A673 (cell line): ENCODE measurements at regions of chr10 and their contacts with region 1.

Region 1: GRCh38 chr10:19728376-19728775 is 87.9 kb upstream of the PLXDC2 start:
- DNase-seq: no peak
- H3K4me3 ChIP-seq: no peak overlapping the region
- H3K27ac ChIP-seq: no peak overlapping the region
- H3K4me1 ChIP-seq: peaks cover 4% of the 10 kb centered on the region
- H3K27me3 ChIP-seq: no peaks in the 10 kb centered on the region
- CTCF ChIP-seq: no peak

Region 2: DNA sequence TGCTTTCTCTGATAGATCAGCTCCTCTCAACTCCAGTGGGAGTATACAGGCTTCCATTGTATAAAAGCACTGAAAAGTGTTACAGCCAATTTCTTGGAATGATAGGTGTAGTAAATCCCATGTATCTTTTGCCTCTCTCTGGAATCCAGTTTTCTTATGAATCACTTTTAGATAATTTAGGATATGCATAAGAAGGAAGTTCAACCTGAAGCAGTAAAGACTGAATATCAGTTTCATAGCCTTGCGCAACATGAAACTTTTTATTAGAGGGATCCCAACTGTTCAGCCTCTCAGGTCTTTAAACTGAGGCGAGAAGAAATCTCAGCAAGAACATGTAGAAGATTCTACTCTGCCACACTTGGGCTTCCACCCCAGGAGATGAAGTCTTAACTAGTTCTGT is 399.8 kb before region 1 on chr10:
- CTCF ChIA-PET with region 1: no interaction called
- POLR2A ChIA-PET with region 1: interaction called, 17 read pairs
- intact Hi-C with region 1: no loop called
- DNase-seq: no peak
- H3K4me3 ChIP-seq: no peak overlapping the region
- H3K27ac ChIP-seq: no peak overlapping the region
- H3K4me1 ChIP-seq: no peaks in the 10 kb centered on the region
- H3K27me3 ChIP-seq: no peaks in the 10 kb centered on the region
- CTCF ChIP-seq: no peak

Region 3: DNA sequence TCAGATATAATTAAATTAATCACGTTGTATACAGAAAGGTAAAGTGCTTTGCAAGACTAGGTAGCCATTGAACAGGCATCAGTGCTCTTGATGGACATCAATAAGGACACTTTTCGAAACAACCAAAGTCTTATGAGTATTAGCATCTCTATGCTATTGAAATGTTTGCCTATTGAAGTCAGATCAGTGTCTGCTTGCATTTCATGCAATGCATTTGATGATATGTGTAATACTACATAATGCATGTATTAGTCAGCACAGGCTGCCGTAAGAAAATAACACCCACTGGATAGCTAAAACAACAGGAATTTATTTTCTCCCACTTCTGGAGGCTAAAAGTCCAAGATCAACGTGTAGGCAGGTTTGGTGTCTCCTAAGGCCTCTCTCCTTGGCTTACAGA is 121.4 kb before region 1 on chr10:
- CTCF ChIA-PET with region 1: no interaction called
- POLR2A ChIA-PET with region 1: no interaction called
- intact Hi-C with region 1: no loop called
- DNase-seq: no peak
- H3K4me3 ChIP-seq: no peak overlapping the region
- H3K27ac ChIP-seq: no peak overlapping the region
- H3K4me1 ChIP-seq: no peaks in the 10 kb centered on the region
- H3K27me3 ChIP-seq: no peaks in the 10 kb centered on the region
- CTCF ChIP-seq: no peak